Activated CD4-positive, alpha-beta memory T cell treated with anti-CD3 and anti-CD28 coated beads for 36 hours (primary cell): ENCODE measurements at regions of chr2 and their contacts with region 1.

Region 1: GRCh38 chr2:230472621-230473018 is 56.6 kb downstream of the SP100 start:
- DNase-seq: peak; percentile 76
- H3K4me3 Mint-ChIP-seq: no peak overlapping the region
- H3K27ac Mint-ChIP-seq: peak overlapping the region; percentile 73
- H3K4me1 Mint-ChIP-seq: peaks cover 32% of the 10 kb centered on the region
- H3K27me3 Mint-ChIP-seq: no peaks in the 10 kb centered on the region

Region 2: DNA sequence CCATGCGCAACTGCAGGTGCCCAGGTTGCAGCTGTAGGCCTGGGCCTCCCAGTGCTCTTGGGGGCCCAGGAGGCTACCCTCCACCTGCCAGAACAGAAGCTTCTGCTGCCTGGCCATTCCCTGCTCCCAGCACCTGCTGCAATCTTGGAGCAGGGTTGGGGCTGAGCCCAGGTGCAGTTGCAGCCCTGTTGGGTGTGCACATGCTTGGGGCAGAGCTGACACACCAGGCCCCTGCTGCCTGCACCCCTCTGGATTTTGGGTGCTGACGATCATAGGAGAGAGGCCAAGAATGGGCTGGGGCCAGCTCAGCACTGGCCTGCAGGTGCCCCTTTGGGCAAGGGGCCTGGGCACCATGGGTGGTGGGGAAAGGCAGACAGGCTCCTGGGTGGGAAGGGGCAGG is 166.1 kb before region 1 on chr2:
- CTCF ChIA-PET with region 1: no interaction called
- POLR2A ChIA-PET with region 1: no interaction called
- intact Hi-C with region 1: no loop called
- DNase-seq: no peak
- H3K4me3 Mint-ChIP-seq: no peak overlapping the region
- H3K27ac Mint-ChIP-seq: no peak overlapping the region
- H3K4me1 Mint-ChIP-seq: no peaks in the 10 kb centered on the region
- H3K27me3 Mint-ChIP-seq: no peaks in the 10 kb centered on the region

Region 3: DNA sequence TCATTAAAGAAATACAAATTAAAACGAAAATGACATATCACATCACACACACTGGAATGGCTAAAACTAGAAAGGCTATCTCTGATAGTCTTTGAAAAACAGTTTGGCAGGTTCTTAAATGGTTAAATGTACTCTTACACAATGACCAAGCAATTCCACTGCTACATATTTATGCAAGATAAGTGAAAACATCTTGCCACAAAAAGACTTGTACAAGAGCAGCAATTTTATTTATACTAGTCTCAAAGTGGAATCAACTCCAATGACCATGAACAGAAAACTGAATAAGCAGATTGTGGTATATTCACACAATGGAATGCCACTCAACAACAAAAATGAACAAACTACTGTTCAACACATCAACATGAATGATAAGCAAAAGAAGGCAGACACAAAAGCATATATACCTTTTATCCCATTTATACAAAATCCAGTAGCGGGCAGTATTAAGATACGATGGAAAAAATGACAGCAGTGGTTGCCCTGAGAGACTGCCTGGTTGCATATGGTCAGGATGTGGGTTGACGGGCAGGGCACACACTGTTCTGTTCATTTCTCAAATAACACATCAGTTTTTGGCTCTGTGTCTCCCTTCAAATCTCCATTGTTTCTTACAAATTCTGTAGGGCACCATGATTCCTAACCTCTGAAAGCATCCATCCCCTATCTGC is 31.3 kb before region 1 on chr2:
- CTCF ChIA-PET with region 1: no interaction called
- POLR2A ChIA-PET with region 1: no interaction called
- intact Hi-C with region 1: loop called (anchors 1 kb)
- DNase-seq: peak; percentile 71
- H3K4me3 Mint-ChIP-seq: peak overlapping the region; percentile 3
- H3K27ac Mint-ChIP-seq: peak overlapping the region; percentile 77
- H3K4me1 Mint-ChIP-seq: peaks cover 52% of the 10 kb centered on the region
- H3K27me3 Mint-ChIP-seq: no peaks in the 10 kb centered on the region

Region 4: DNA sequence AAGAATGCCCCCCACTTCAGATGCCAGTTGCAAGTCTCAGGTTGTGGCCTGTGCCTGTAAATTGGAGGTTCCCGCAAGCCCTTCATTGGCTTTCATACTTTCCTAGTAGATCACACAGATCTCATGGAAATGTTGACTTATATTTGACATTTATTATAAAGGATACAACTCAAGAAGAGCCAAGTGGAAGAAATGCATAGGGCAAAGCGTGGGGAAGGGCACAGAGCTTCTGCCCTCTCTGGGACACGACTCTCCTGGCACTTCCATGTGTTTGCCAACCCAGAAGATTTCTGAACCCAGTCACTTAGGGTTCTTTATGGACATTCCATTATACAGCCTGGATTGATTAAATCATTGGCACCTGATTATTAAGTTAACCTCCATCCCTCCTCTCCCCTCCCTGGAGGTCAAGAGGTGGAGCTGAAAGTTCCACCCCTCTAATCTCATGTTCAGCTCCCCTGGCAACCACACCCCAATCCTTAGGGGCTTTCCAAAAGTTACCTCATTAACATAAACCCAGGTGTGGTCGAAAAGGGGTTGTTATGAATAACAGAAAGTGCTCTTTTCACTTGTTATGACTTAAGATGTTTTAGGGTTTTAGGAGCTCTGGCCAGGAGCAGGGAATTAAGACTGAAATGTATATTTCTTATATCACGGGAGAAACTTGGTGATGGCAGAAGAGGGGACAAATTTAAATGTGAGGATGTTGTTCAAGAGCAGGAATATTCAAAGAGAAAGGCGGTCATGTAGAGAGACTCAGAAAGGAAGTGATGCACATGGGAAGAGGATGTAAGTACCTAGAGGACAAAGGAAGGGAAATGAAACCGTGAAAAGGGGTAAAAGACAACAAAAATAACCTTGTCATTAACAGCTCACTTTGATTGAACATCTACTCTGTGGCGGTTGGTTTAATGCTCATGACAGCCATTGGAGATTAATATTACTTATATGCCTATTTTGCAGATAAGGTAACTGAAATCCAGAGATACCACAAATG is 24.9 kb before region 1 on chr2:
- CTCF ChIA-PET with region 1: no interaction called
- POLR2A ChIA-PET with region 1: no interaction called
- intact Hi-C with region 1: loop called (anchors 2 kb)
- DNase-seq: peak; percentile 53
- H3K4me3 Mint-ChIP-seq: peak overlapping the region; percentile 40
- H3K27ac Mint-ChIP-seq: peak overlapping the region; percentile 80
- H3K4me1 Mint-ChIP-seq: peaks cover 59% of the 10 kb centered on the region
- H3K27me3 Mint-ChIP-seq: no peaks in the 10 kb centered on the region

Region 5: DNA sequence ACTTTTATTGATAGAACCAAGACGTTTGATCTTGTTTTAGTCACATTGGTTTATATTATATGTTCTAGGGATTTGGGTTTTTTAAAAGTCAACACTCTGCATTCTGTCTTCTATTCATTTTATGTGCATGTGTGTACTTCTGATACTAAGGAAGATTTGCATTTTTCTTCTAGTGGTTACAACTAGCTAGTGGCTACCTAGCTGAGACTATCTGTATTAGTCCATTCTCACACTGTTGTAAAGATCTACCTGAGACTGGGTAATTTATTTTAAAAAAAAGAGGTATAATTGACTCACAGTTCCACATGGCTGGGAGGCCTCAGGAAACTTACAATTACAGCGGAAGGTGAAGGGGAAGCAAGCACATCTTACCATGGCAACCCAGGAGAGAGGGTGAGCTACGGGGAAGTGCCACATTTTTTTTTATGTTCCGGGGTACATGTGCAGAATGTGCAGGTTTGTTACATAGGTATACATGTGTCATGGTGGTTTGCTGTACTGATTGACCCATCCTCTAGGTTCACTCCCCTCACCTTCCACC is 13.3 kb after region 1 on chr2:
- CTCF ChIA-PET with region 1: no interaction called
- POLR2A ChIA-PET with region 1: no interaction called
- intact Hi-C with region 1: no loop called
- DNase-seq: no peak
- H3K4me3 Mint-ChIP-seq: no peak overlapping the region
- H3K27ac Mint-ChIP-seq: no peak overlapping the region
- H3K4me1 Mint-ChIP-seq: peaks cover 2% of the 10 kb centered on the region
- H3K27me3 Mint-ChIP-seq: no peaks in the 10 kb centered on the region

Region 6: GRCh38 chr2:230589497-230590015 is 116.9 kb after region 1 on chr2:
- CTCF ChIA-PET with region 1: no interaction called
- POLR2A ChIA-PET with region 1: no interaction called
- intact Hi-C with region 1: loop called (anchors 5 kb)
- DNase-seq: peak; percentile 61
- H3K4me3 Mint-ChIP-seq: no peak overlapping the region
- H3K27ac Mint-ChIP-seq: peak overlapping the region; percentile 61
- H3K4me1 Mint-ChIP-seq: peaks cover 48% of the 10 kb centered on the region
- H3K27me3 Mint-ChIP-seq: no peaks in the 10 kb centered on the region

Region 7: DNA sequence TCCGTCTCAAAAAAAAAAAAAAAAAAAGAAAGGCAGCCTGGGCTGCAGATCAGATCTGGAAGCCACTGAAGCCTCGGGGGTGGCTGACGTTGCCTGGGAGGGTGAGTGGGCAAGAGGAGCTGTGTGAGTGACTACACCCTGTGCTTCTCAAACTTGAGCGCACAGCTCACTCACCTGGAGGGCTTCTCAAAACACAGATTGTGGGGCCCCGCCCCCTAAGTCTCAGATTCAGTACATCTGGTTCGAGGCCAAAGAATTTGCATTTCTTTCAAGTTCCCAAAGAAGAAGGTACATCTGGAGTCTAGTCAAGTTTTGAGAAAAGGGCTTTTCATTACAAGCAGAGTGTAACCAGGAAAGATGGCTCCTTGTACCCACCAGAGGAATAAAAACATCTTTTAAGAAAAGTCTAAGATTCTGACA is 142.3 kb after region 1 on chr2:
- CTCF ChIA-PET with region 1: no interaction called
- POLR2A ChIA-PET with region 1: no interaction called
- intact Hi-C with region 1: loop called (anchors 2 kb)
- DNase-seq: peak; percentile 78
- H3K4me3 Mint-ChIP-seq: no peak overlapping the region
- H3K27ac Mint-ChIP-seq: peak overlapping the region; percentile 56
- H3K4me1 Mint-ChIP-seq: peaks cover 22% of the 10 kb centered on the region
- H3K27me3 Mint-ChIP-seq: no peaks in the 10 kb centered on the region